ENCODE measurements at regions of chr6 and their contacts with region 1.

Region 1: DNA sequence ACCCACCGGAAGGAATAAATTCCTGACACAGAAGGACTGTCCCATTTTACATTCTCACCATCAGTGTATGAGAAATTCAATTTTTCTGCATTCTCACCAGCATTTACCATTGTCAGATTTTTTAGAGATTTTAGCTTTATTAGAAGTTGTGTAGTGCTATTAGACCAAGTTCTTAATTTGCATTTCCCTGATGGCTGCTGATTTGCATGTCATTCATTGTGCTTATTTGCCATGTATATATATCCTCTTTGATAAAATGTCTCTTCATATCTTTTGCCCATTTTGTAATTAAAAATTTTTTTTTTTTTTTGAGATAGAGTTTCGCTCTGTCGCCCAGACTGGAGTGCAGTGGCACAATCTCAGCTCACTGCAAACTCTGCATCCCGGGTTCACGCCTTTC is 9.8 kb upstream of the HLA-DRB5 start:
- DNase-seq: no peak
- ATAC-seq: no peak
- H3K4me3 ChIP-seq: no peak overlapping the region
- H3K27ac ChIP-seq: no peak overlapping the region
- H3K4me1 ChIP-seq: no peaks in the 10 kb centered on the region
- H3K27me3 ChIP-seq: no peaks in the 10 kb centered on the region
- CTCF ChIP-seq: no peak
- EP300 ChIP-seq: no peak
- POLR2A ChIP-seq: no peak
- RAD21 ChIP-seq: no peak

Region 2: GRCh38 chr6:32133786-32134185 is 406.1 kb before region 1 on chr6:
- CTCF ChIA-PET with region 1: no interaction called
- POLR2A ChIA-PET with region 1: no interaction called
- in situ Hi-C with region 1: no loop called
- intact Hi-C with region 1: no loop called
- DNase-seq: no peak
- ATAC-seq: no peak
- H3K4me3 ChIP-seq: no peak overlapping the region
- H3K27ac ChIP-seq: no peak overlapping the region
- H3K4me1 ChIP-seq: peaks cover 27 to 32% of the 10 kb centered on the region in 2 experiments
- H3K27me3 ChIP-seq: no peaks in the 10 kb centered on the region
- CTCF ChIP-seq: no peak
- EP300 ChIP-seq: no peak
- POLR2A ChIP-seq: no peak
- RAD21 ChIP-seq: no peak

Region 3: GRCh38 chr6:32491700-32492099 is 48.1 kb before region 1 on chr6:
- CTCF ChIA-PET with region 1: no interaction called
- POLR2A ChIA-PET with region 1: no interaction called
- in situ Hi-C with region 1: loop called (anchors 5 kb)
- intact Hi-C with region 1: no loop called
- DNase-seq: no peak
- ATAC-seq: no peak
- H3K4me3 ChIP-seq: no peak overlapping the region
- H3K27ac ChIP-seq: no peak overlapping the region
- H3K4me1 ChIP-seq: no peaks in the 10 kb centered on the region
- H3K27me3 ChIP-seq: no peaks in the 10 kb centered on the region
- CTCF ChIP-seq: no peak
- EP300 ChIP-seq: no peak
- POLR2A ChIP-seq: no peak
- RAD21 ChIP-seq: no peak